Endothelial cell of umbilical vein (primary cell): ENCODE measurements at regions of chr4 and their contacts with region 1.

Region 1: DNA sequence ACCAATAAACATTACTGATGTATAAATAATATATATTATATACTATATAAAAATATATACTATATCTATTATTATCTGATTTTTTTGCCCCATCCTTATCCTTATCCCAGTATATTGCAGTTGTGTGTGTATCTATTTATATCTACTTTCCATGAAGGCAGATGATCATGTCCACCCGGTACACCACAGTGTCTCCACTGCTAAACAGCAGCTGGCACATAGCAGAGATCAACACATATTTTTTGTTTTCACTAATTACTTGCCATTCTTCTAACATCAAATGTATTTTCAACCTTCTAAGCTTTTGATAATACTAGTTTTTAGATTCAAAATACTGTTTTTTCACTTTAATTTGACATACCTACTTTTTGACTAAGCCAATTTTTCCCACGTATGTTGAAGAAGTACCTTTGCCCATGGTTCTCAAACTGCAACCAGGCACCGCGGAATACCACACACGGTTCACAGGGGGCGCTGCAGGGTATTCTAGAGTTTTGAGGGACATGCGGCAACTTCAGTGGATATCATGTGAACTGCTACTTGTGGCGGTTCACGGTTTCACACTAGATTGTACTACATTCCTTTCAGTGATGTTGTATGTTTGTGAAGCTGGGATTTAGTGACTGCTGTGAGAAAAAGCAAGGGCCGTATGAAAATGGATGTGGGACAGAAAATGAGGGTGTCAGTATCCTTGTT is 182.5 kb upstream of the NPY2R start:
- DNase-seq: peak; percentile 85
- H3K4me3 ChIP-seq: peak overlapping the region in 1 of 3 experiments; percentile 21
- H3K27ac ChIP-seq: peak overlapping the region; percentile 73
- H3K4me1 ChIP-seq: peaks cover 11% of the 10 kb centered on the region
- H3K27me3 ChIP-seq: no peaks in the 10 kb centered on the region
- CTCF ChIP-seq: peak; percentile 75 to 79
- POLR2A ChIP-seq: no peak

Region 2: GRCh38 chr4:154982187-154983047 is 43.5 kb before region 1 on chr4:
- CTCF ChIA-PET with region 1: interaction called, 11 read pairs
- POLR2A ChIA-PET with region 1: no interaction called
- dilution Hi-C with region 1: no loop called
- intact Hi-C with region 1: loop called (anchors 1 kb)
- DNase-seq: peak; percentile 61
- H3K4me3 ChIP-seq: no peak overlapping the region
- H3K27ac ChIP-seq: no peak overlapping the region
- H3K4me1 ChIP-seq: no peaks in the 10 kb centered on the region
- H3K27me3 ChIP-seq: peaks cover 0 to 4% of the 10 kb centered on the region in 2 experiments
- CTCF ChIP-seq: peak; percentile 64
- POLR2A ChIP-seq: no peak

Region 3: DNA sequence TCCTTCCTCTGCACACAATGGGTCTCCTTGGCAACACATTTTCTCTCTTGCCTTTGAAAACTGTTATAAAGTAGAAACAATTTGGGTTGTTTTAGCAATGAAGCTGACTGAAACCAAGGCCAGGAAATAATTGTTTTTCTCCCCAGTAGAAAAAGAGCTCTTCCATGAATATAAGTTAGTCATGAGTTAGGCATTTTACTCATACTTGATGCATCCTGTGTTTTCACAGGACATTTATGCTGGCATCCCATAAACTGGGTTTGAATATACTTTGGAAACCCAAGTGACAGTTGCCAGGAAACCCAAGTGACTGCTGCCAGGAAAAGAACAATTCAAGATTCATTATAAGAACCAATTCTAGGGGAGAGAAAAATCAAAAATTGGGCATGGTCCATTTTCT is 54.0 kb after region 1 on chr4:
- CTCF ChIA-PET with region 1: interaction called, 8 read pairs
- POLR2A ChIA-PET with region 1: interaction called, 3 read pairs
- dilution Hi-C with region 1: no loop called
- intact Hi-C with region 1: loop called (anchors 1 kb)
- DNase-seq: peak; percentile 86
- H3K4me3 ChIP-seq: no peak overlapping the region
- H3K27ac ChIP-seq: peak overlapping the region; percentile 87
- H3K4me1 ChIP-seq: peaks cover 22% of the 10 kb centered on the region
- H3K27me3 ChIP-seq: no peaks in the 10 kb centered on the region
- CTCF ChIP-seq: no peak
- POLR2A ChIP-seq: no peak

Region 4: DNA sequence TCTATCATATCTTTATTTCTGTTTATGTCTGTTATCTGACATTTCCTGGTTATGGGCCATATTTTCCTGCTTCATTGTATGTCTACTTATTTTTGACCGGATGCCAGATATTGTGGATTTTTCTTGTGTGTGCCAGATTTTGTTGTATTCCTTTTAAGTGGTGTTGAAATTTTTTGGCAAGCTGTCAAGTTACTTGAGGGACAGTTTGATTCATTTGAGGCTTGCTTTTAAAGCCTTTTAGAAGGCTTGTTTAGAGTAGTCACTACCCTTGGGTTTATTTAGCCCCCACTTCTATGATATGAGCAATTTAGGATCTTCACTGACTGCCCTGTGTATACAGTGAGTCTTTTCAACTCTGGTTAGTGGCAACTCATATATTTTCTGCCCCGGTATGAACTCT is 153.3 kb after region 1 on chr4:
- CTCF ChIA-PET with region 1: no interaction called
- POLR2A ChIA-PET with region 1: no interaction called
- dilution Hi-C with region 1: no loop called
- intact Hi-C with region 1: loop called (anchors 5 kb)
- DNase-seq: peak; percentile 82
- H3K4me3 ChIP-seq: no peak overlapping the region
- H3K27ac ChIP-seq: no peak overlapping the region
- H3K4me1 ChIP-seq: no peaks in the 10 kb centered on the region
- H3K27me3 ChIP-seq: no peaks in the 10 kb centered on the region
- CTCF ChIP-seq: no peak
- POLR2A ChIP-seq: no peak

Region 5: DNA sequence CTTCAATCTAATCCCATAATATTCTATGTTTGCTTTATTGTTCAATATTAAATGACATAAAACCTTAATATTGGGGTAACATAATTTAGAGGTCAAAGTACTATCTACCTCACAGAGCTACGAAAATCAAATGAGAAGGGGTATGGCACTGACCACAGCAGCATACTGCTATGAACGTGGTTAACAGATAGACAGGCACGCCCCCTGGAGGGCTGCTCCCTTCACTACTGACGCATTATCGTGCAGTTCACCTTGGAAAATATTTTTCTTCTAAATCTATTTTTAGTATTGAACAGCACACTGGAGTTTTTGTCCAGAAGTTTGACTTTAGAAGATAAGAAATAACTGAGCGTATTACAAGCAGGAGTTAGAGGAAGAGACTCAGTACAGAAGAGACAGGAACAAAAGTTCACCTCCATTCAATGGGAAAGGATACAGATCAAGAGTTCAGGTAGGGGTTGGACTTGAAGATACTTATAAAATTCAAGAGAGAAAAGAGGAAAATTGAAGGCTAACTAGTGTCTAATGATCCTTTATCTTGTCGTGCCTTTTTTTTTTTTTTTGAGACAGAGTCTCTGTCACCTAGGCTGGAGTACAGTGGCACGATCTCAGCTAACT is 328.1 kb after region 1 on chr4:
- CTCF ChIA-PET with region 1: interaction called, 49 read pairs
- POLR2A ChIA-PET with region 1: no interaction called
- dilution Hi-C with region 1: no loop called
- intact Hi-C with region 1: loop called (anchors 1 kb)
- DNase-seq: peak; percentile 76
- H3K4me3 ChIP-seq: no peak overlapping the region
- H3K27ac ChIP-seq: no peak overlapping the region
- H3K4me1 ChIP-seq: no peaks in the 10 kb centered on the region
- H3K27me3 ChIP-seq: no peaks in the 10 kb centered on the region
- CTCF ChIP-seq: peak; percentile 82 to 83
- POLR2A ChIP-seq: no peak

Region 6: DNA sequence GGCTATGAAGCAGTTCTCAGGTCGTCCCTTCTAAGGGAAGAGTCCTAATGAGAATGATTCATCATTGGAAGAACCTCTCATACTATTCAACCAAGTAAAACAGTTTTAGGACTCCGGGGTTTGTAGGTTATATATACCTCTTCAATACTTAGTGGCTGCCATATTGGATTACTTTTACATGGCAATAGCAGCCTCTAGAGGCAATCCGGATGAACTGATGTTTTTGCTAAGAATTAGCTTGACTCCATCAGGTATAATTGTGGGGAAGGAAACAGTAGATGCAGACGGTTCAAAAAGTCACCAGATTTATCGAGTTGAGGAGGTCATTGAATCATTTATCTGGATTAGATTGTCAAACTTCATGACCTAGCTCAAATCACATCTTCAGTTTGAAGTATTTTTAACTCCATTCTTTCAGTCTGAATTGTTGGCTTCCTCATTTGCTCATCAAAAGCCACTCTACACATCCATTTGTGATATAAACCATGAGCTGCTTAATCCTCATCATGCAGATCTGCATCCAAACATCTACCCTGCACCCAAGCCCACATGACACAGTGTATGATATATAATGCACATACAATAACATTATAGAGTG is 761.3 kb after region 1 on chr4:
- CTCF ChIA-PET with region 1: interaction called, 7 read pairs
- POLR2A ChIA-PET with region 1: no interaction called
- dilution Hi-C with region 1: no loop called
- intact Hi-C with region 1: loop called (anchors 10 kb)
- DNase-seq: peak; percentile 75
- H3K4me3 ChIP-seq: no peak overlapping the region
- H3K27ac ChIP-seq: no peak overlapping the region
- H3K4me1 ChIP-seq: no peaks in the 10 kb centered on the region
- H3K27me3 ChIP-seq: no peaks in the 10 kb centered on the region
- CTCF ChIP-seq: peak; percentile 64 to 67
- POLR2A ChIP-seq: no peak